ENCODE measurements at regions of chr12 and their contacts with region 1.

Region 1: GRCh38 chr12:89328246-89329030 is 23.9 kb downstream of the DUSP6 start:
- DNase-seq: no peak
- ATAC-seq: no peak; the same call in 2 of the 3 replicates
- H3K4me3 ChIP-seq: no peak overlapping the region
- H3K27ac ChIP-seq: no peak overlapping the region
- H3K4me1 ChIP-seq: peaks cover 2 to 9% of the 10 kb centered on the region in 2 experiments; a peak in 3 of 5 replicates
- H3K27me3 ChIP-seq: no peaks in the 10 kb centered on the region; a peak in 1 of 5 replicates
- CTCF ChIP-seq: no peak
- EP300 ChIP-seq: no peak
- POLR2A ChIP-seq: no peak
- RAD21 ChIP-seq: no peak

Region 2: DNA sequence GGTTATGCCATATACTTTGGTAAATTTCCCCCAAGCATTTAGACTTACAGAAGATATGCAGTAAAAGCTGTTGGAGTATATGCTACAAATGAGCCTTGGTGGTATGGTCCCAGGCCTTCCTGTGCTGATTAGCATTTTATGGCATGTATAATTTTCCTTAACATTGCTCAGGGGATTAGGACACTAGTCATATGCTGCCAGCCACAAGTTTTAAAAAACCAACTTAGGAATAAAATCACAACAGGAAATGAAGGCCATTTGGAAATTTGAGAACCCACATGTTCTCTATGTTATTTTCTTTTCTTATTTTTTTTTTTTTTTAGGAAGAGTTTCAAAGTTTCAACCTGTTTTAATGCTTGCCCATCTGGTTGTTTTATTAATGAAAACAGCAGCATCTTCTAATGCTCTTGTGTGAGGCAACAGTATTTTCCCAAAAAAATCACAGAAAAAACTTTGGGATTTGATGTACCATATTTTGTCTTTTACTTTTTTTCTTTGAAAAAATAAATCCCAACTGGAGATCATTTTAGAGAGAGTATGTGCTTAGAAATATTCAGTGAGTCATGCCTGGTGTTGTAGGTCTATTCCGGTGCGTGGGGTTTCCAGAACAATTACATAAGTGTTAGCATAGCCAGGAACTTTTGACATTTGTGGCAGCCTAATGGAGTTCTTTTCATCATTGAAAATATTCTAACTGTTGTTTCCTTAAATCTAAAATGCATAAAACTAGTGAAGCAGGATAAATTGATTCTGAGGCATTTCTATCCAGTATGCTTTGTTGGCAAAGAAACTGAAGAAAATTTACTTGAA is 45.5 kb after region 1 on chr12:
- CTCF ChIA-PET with region 1: no interaction called
- POLR2A ChIA-PET with region 1: no interaction called
- in situ Hi-C with region 1: loop called (anchors 5 kb)
- intact Hi-C with region 1: no loop called
- DNase-seq: no peak
- ATAC-seq: no peak
- H3K4me3 ChIP-seq: no peak overlapping the region
- H3K27ac ChIP-seq: no peak overlapping the region
- H3K4me1 ChIP-seq: peaks cover 3 to 32% of the 10 kb centered on the region in 2 experiments; a peak in 4 of 5 replicates
- H3K27me3 ChIP-seq: peaks cover 0 to 6% of the 10 kb centered on the region in 2 experiments; a peak in 2 of 5 replicates
- CTCF ChIP-seq: no peak
- EP300 ChIP-seq: no peak
- POLR2A ChIP-seq: no peak
- RAD21 ChIP-seq: no peak